AG04449 (cell line): ENCODE measurements at regions of chr1 and their contacts with region 1.

Region 1: DNA sequence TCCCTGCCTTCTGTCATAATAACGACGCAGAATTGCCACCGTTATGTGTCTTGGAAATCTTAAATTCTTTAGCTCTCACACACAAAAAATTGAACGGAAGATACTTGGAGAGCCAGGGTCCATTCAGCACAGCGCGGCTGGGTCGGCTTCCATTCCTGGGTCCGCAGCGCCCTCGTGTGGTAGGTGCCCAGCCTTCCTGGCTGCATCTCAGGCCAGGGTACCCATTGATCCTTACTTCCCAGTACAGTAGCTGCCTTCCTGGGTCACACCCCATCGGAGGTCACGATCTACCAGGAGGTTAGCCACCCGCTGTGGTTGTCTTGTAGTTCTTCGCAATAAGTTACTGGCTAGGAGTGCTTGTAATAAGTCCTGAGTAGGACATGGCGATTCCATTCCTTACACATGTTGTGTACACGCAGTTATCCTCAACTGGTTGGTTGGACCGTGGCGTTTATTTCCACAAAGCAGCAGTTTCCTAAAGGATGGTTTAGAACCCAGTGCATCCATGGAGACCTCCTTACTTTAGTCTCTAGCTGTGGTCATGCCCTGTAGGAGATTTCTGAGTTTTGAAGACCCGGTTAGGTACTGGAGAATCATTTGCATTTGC is 9.9 kb upstream of the MTARC1 start:
- DNase-seq: peak; percentile 7
- H3K4me3 ChIP-seq: no peak overlapping the region
- CTCF ChIP-seq: peak; percentile 95

Region 2: GRCh38 chr1:220281159-220281574 is 495.7 kb before region 1 on chr1:
- CTCF ChIA-PET with region 1: interaction called, 99 read pairs
- POLR2A ChIA-PET with region 1: no interaction called
- DNase-seq: no peak
- H3K4me3 ChIP-seq: no peak overlapping the region
- CTCF ChIP-seq: peak; percentile 44

Region 3: DNA sequence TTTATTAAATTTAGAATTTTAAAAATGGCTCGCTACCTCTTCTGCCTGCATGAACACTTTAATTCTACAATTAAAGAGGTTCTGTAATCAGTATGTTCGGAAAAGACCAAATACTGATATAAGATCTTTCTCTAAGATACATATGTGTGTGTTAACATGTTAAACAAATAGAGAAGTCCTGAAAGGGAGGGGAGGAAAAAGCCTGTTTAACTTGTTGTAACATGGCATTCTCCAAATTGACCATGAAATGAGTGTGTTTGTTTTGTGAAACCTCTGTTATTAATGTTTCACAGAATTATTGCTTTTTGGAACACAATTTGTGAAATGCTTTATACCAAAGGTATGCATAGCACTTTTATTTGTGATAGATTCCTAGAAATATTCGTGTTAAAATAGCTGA is 171.9 kb before region 1 on chr1:
- CTCF ChIA-PET with region 1: no interaction called
- POLR2A ChIA-PET with region 1: no interaction called
- DNase-seq: no peak
- H3K4me3 ChIP-seq: no peak overlapping the region
- CTCF ChIP-seq: no peak

Region 4: GRCh38 chr1:220680085-220680687 is 96.6 kb before region 1 on chr1:
- CTCF ChIA-PET with region 1: interaction called, 64 read pairs
- POLR2A ChIA-PET with region 1: no interaction called
- DNase-seq: no peak
- H3K4me3 ChIP-seq: no peak overlapping the region
- CTCF ChIP-seq: peak; percentile 70

Region 5: GRCh38 chr1:220755309-220755708 is 21.5 kb before region 1 on chr1:
- CTCF ChIA-PET with region 1: interaction called, 59 read pairs
- POLR2A ChIA-PET with region 1: no interaction called
- DNase-seq: no peak
- H3K4me3 ChIP-seq: no peak overlapping the region
- CTCF ChIP-seq: no peak

Region 6: DNA sequence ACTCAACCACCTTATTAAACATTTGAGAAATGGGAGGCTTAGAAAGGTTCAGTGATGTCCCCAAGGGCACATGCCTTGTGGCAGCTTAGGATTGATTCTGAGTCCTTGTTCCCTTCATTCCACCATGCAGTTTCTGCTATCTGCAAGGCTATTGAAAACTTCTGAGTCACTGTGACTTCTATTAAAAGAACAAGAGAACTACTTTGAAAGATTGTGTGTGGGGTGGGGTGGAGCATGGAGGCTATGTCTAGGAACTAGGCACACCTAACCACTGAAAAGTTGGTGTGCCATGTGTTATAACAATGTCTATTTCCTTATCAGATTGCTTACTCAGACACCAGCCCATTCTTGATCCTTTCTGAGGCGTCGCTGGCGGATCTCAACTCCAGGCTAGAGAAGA is 20.7 kb after region 1 on chr1:
- CTCF ChIA-PET with region 1: interaction called, 18 read pairs
- POLR2A ChIA-PET with region 1: no interaction called
- DNase-seq: no peak
- H3K4me3 ChIP-seq: no peak overlapping the region
- CTCF ChIP-seq: no peak

Region 7: DNA sequence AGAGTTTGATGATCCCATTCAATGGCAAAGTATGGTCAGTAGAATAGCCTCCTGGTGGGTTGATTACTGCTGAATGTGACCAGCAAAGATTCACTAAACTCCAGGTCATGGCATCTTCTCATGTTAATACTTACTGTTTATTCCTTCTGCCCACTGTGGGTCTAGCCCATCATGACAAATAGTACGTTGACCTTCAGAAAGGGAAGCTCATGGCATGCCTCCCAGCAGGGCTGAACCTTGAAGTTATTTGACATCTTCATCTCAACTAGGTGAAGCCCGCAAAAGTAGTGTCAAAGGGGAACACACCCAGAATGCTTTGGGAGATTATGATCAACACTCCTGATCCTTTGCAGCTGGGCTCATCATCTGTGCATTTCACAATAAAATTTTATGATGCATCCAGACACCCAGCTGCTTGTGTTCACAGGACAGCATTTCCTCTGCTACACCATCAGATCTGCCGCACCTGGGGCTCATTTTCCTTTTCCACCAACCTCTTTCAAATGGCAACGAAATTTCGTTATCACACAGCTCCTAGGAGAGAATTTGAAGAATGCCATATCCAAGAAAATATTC is 152.0 kb after region 1 on chr1:
- CTCF ChIA-PET with region 1: no interaction called
- POLR2A ChIA-PET with region 1: no interaction called
- DNase-seq: no peak
- H3K4me3 ChIP-seq: no peak overlapping the region
- CTCF ChIP-seq: no peak